HEK293 (cell line): ENCODE measurements at regions of chr16 and their contacts with region 1.

Region 1: DNA sequence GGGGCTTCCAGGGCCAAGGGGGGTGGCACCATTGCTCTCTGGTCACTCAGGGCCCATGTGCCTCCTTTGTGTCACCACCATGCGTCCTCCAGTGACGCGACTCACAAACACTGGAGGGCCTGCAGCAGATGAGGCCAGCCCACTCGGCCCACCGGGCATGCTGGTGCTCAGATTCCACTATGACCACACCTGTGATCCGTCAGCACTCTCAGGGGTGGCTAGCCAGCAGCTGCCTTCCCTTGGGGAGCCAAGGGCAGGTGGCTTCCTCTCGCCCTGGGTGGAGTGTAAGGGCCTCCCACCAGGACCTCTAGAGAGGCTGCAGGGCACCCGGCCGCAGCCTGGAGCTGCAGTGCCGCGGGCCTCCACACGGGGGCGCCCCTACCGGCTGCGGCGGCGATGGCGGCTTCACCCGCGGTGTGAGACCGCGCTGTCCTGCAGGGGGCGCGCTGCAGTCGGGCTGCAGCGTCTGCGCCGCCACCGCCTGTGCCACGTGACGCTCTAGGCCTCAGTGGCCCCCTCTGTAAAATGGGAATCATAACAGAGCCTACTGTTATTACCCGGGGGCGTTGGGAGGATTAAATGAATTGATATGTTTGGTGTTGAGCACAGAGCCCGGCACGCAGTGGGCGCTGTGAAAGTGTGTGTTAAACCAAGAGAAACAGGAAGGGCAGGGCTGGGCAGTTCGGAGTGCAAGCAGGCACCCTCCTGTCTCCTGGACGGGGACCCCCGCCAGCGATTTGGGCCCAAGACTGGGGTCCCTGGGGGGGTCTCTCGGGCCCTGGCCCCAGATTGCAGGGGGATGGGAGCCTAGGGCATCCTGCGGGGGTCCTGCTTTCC is 192.4 kb upstream of the GSE1 start:
- H3K4me3 ChIP-seq: no peak overlapping the region
- H3K27ac ChIP-seq: no peak overlapping the region
- H3K4me1 ChIP-seq: no peaks in the 10 kb centered on the region; the same call in 1 of the 2 replicates
- CTCF ChIP-seq: peak; percentile 96

Region 2: DNA sequence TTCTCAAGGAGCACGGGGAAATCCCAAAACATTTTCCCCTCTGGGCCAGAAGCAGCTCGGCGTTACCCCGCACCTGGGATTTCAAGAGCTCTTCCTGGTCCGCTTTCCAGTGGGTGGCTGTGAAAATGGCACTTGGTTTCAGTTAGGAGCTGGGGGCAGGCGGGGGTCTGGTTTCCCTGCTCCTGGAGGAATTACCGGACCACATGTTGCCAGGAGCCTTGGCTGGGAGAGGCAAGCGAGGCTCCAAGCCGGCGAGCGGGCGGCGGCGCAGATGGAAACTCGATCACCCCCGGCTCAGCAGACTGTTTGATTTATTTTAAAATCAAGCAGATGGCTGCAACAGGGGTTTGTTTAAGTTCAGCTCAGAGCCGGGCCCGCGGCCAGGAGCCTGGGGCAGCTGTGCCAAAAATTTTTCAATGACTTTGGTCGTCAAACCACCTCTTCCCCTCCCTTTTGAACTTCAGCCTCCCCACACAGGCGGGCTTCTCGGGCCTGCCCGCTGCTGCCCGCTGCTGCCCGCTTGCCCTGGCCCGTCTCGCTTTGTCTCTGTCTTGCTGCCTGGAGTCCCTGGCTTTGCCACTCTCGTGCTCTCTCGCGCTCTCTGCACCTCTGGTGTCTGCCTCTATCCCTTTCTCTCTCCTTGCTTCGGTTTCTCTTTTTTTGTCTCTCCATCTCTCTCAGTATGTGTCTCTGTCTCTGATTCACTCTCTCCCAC is 200.4 kb before region 1 on chr16:
- CTCF ChIA-PET with region 1: no interaction called
- POLR2A ChIA-PET with region 1: no interaction called
- H3K4me3 ChIP-seq: no peak overlapping the region
- H3K27ac ChIP-seq: peak overlapping the region; percentile 81
- H3K4me1 ChIP-seq: peaks cover 14% of the 10 kb centered on the region
- CTCF ChIP-seq: no peak

Region 3: DNA sequence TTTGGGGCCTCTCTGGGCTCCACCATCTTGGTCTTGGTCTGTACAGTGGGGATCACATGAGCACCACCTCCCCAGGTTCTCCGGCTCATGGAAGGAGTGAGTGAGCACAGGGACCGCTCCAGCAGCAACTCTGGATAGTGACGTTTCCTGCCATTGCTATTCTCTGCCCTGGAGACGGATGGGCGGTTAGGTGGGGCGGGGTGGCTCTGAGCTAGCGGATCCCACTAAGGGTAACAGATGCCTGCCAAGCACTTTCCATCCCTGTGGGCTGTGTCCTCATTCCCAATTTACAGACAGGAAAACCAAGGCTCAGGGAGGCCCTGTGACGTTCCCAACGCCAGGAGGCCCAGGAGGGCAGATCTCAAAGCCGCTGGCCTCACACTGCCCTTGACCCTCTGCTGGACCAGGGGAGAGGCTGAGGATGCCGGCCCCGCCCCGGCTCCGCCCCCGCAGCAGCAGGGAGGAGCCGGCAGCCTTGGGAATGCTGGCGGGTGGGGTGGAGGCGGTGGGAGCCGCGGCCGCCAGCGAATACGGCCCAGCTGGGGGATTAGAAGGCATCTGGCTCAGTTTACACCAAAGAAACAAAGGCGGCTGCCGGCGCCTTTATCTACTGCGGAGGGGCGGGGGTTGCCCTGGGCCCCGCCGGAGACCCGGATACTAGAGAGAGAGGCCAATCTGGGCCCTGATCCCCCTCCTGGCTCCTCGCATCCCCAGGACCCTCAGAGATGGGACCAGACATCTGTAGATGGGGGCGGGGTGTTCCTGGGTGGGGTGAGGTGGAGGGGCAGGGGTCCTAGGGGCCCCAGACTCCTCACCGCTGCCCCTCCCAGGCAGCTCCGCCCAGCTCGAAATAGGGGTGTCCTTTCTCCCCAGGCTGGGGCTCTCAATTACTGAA is 186.2 kb before region 1 on chr16:
- CTCF ChIA-PET with region 1: no interaction called
- POLR2A ChIA-PET with region 1: no interaction called
- H3K4me3 ChIP-seq: peak overlapping the region; percentile 14
- H3K27ac ChIP-seq: no peak overlapping the region
- H3K4me1 ChIP-seq: peaks cover 6% of the 10 kb centered on the region
- CTCF ChIP-seq: no peak

Region 4: DNA sequence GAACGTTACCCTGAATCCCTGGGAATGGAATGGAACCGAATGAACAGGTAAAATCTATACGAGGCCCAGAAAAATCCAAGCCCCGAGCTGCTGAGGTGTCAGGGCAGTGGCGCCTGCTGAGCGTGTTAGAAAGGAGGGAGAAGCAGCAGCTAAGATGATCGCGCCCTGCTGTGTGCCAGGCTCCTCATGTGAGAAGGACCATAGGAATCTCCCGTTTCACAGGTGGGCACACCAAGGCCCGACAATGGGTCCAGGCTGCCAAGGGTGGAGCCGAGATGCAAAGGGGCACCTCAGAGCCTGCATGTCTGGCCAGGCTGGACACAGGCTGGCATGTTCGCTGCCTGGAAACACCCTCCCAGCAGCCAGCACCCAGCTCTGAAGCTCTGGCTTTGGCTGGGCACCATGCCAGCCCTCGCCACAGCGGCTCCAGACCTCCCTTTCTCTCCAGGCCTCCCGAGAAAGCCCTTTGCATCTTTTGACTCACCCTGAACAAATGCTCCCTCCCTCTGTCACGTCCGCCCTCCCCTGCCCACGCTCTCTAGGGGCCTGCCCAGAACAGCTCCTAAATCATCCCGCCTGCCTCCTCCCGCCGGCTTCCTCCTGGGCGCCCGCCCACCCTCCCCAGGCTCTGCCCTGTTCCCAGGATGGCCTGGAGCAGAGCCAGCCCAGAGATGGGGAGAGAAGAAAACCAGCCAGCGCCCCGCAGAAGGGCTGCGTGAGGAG is 25.4 kb before region 1 on chr16:
- CTCF ChIA-PET with region 1: interaction called, 17 read pairs
- POLR2A ChIA-PET with region 1: no interaction called
- H3K4me3 ChIP-seq: no peak overlapping the region
- H3K27ac ChIP-seq: no peak overlapping the region
- H3K4me1 ChIP-seq: peaks cover 16% of the 10 kb centered on the region
- CTCF ChIP-seq: no peak

Region 5: GRCh38 chr16:85461814-85462713 is 41.3 kb after region 1 on chr16:
- CTCF ChIA-PET with region 1: interaction called, 11 read pairs
- POLR2A ChIA-PET with region 1: no interaction called
- H3K4me3 ChIP-seq: peak overlapping the region; percentile 7; the same call in 1 of the 2 replicates
- H3K27ac ChIP-seq: peak overlapping the region; percentile 61
- H3K4me1 ChIP-seq: peaks cover 11% of the 10 kb centered on the region
- CTCF ChIP-seq: no peak

Region 6: GRCh38 chr16:85554112-85554813 is 133.5 kb after region 1 on chr16:
- CTCF ChIA-PET with region 1: interaction called, 13 read pairs
- POLR2A ChIA-PET with region 1: no interaction called
- H3K4me3 ChIP-seq: peak overlapping the region; percentile 69
- H3K27ac ChIP-seq: peak overlapping the region; percentile 91
- H3K4me1 ChIP-seq: peaks cover 5% of the 10 kb centered on the region
- CTCF ChIP-seq: no peak

Region 7: DNA sequence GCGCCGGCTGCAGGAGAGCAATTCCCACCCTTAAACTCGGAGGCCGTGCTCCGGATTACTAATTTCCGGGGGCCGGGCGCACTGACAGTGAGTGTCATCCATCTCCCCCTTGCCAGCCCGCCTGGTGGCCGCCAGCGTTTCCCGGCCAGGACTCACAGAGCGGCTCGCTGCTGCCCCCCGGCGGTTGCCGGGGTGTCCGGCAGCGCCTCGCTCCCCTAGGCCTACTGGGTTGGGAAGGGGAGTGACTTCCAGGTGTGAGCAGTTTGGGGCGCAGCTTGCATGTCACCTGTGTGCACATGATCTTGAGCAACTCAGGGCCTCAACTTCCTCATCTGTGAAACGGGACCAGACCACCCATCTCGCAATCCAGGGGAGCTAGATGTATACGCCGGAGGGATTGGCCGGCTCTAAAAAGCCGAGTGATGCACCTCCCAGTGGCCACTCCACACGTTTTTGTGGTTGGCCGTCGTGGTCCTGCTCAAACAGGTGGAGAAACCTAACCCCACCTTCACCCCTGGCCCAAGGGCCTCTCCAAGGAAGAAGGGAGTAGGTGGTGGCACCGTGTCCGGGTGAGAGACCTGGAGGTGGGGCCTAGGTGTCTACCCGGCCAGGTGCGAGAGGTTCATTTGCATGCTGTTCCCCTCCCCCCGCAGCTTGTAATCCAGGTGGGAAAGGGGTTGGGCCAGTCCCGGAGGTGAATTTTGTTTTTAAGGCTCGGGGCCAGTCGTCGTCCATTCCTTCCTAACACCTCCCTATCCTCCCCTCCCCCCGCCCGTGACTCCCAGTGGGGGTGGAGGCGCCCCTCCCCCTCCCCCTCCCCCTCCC is 190.0 kb after region 1 on chr16:
- CTCF ChIA-PET with region 1: interaction called, 39 read pairs
- POLR2A ChIA-PET with region 1: no interaction called
- H3K4me3 ChIP-seq: peak overlapping the region; percentile 48; the same call in 1 of the 2 replicates
- H3K27ac ChIP-seq: peak overlapping the region; percentile 99; the same call in 1 of the 2 replicates
- H3K4me1 ChIP-seq: peaks cover 2% of the 10 kb centered on the region; the same call in 1 of the 2 replicates
- CTCF ChIP-seq: peak; percentile 94